ENCODE measurements at regions of chr6 and their contacts with region 1.

Region 1: GRCh38 chr6:37149745-37150144 is 20.2 kb upstream of the PIM1 start:
- DNase-seq: no peak
- ATAC-seq: no peak
- H3K4me3 ChIP-seq: no peak overlapping the region
- H3K4me3 Mint-ChIP-seq: no peak overlapping the region
- H3K27ac ChIP-seq: no peak overlapping the region
- H3K27ac Mint-ChIP-seq: no peak overlapping the region
- H3K4me1 ChIP-seq: peaks cover under 1% of the 10 kb centered on the region
- H3K4me1 Mint-ChIP-seq: no peaks in the 10 kb centered on the region
- H3K27me3 ChIP-seq: no peaks in the 10 kb centered on the region
- H3K27me3 Mint-ChIP-seq: no peaks in the 10 kb centered on the region
- CTCF ChIP-seq: no peak

Region 2: GRCh38 chr6:37074053-37074827 is 75.5 kb before region 1 on chr6:
- CTCF ChIA-PET with region 1: no interaction called
- POLR2A ChIA-PET with region 1: no interaction called
- intact Hi-C with region 1: loop called in 1 of 2 experiments (anchors 5 kb)
- DNase-seq: no peak
- ATAC-seq: no peak
- H3K4me3 ChIP-seq: no peak overlapping the region
- H3K4me3 Mint-ChIP-seq: no peak overlapping the region
- H3K27ac ChIP-seq: no peak overlapping the region
- H3K27ac Mint-ChIP-seq: no peak overlapping the region
- H3K4me1 ChIP-seq: peaks cover 8% of the 10 kb centered on the region
- H3K4me1 Mint-ChIP-seq: peaks cover 7% of the 10 kb centered on the region
- H3K27me3 ChIP-seq: no peaks in the 10 kb centered on the region
- H3K27me3 Mint-ChIP-seq: no peaks in the 10 kb centered on the region
- CTCF ChIP-seq: no peak

Region 3: DNA sequence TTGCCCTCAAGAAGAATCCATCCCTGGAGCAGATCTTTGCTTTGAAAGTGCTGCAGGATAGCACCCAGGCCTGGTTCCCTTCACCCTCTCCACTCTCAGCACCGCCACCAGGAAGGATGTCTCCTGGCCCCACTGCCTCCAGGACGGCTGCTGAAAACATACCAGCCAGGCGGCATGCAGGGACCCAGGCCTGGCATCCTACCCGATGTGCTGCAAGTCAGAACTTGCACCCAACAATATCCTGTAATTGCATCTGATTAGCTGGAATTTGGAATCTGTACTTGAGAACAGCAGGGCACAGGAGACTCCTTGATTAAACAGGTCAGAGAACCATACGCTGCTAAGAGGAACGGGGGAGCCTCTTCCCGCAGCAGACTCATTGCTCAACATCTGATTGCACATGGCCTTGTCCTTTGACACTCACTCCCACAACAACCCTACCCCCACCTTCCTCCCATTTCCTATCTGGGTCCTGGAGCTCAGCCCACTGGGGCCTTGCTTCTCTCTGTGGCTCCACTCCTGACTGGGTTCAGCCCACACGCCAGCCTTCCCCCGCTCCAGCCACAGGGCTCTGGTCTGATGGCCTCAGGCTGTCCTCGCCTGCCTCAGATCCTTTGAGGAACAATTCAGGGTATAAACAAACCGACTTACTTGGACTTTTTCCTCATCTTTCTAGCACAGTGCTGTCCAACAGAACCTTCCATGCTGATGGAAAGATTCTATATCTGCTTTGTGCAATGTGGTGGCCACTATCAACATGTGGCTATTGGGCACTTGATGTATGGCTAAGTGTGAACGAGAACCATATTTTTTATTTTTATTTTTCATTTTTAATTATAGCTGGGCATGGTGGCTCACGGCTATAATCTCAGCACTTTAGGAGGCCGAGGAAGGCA is 66.3 kb before region 1 on chr6:
- CTCF ChIA-PET with region 1: no interaction called
- POLR2A ChIA-PET with region 1: no interaction called
- intact Hi-C with region 1: loop called in 1 of 2 experiments (anchors 5 kb)
- DNase-seq: peak in 2 of 14 experiments; percentile 27 to 32
- ATAC-seq: no peak
- H3K4me3 ChIP-seq: no peak overlapping the region
- H3K4me3 Mint-ChIP-seq: no peak overlapping the region
- H3K27ac ChIP-seq: no peak overlapping the region
- H3K27ac Mint-ChIP-seq: no peak overlapping the region
- H3K4me1 ChIP-seq: no peaks in the 10 kb centered on the region
- H3K4me1 Mint-ChIP-seq: no peaks in the 10 kb centered on the region
- H3K27me3 ChIP-seq: no peaks in the 10 kb centered on the region
- H3K27me3 Mint-ChIP-seq: no peaks in the 10 kb centered on the region
- CTCF ChIP-seq: no peak

Region 4: GRCh38 chr6:38179300-38179699 is 1029.6 kb after region 1 on chr6:
- CTCF ChIA-PET with region 1: no interaction called
- POLR2A ChIA-PET with region 1: no interaction called
- intact Hi-C with region 1: no loop called
- DNase-seq: peak in 1 of 14 experiments; percentile 11
- ATAC-seq: no peak
- H3K4me3 ChIP-seq: no peak overlapping the region
- H3K4me3 Mint-ChIP-seq: no peak overlapping the region
- H3K27ac ChIP-seq: no peak overlapping the region
- H3K27ac Mint-ChIP-seq: no peak overlapping the region
- H3K4me1 ChIP-seq: no peaks in the 10 kb centered on the region
- H3K4me1 Mint-ChIP-seq: no peaks in the 10 kb centered on the region
- H3K27me3 ChIP-seq: no peaks in the 10 kb centered on the region
- H3K27me3 Mint-ChIP-seq: no peaks in the 10 kb centered on the region
- CTCF ChIP-seq: no peak